ENCODE measurements at regions of chr1 and their contacts with region 1.

Region 1: DNA sequence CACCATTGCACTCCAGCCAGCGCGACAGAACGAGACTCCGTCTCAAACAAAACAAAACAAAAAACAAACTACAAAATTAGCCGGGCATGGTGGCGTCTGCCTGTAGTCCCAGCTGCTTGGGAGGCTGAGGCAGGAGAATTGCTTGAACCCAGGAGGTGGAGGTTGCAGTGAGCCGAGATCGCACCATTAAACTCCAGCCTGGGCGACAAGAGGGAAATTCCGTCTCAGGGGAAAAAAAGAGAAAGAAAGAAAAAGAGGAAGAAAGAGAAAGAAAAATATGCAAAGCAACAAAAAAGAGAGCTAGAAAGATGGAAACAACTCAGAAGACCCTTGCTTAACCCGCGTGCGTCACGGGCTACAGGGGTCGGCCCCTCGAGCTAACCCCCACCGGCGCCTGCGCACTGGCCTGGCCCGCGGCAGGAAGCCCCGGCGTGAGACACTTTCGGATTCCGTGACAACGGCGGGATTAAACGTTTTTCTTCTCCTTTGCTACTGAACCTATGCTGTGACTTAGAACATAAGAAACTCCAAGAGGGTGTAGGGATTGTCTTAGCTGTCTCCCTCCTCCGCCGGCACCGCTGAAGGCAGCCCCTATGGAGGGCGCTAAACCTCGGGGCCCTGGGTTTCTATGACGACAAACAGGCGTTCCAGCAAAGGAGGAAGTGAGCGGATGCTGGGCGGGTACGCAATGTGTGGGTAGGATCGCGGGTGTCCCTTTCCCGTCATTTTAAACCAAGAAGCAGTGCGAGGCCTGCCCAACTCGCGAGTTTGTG is at the start of gene AXDND1:
- DNase-seq: peak; percentile 93
- H3K4me3 ChIP-seq: peak within 1 kb of the TSS; percentile 89
- H3K27ac ChIP-seq: peak within 1 kb of the TSS; percentile 93
- H3K4me1 ChIP-seq: no peaks in the 10 kb centered on the region
- H3K27me3 ChIP-seq: no peaks in the 10 kb centered on the region
- CTCF ChIP-seq: no peak
- total RNA-seq, gene AXDND1: 2.8 to 7.9 TPM

Region 2: GRCh38 chr1:179081687-179082332 is 283.7 kb before region 1 on chr1 and contains the start of gene TOR3A:
- intact Hi-C with region 1: loop called (anchors 5 kb)
- DNase-seq: peak; percentile 96
- H3K4me3 ChIP-seq: peak within 1 kb of the TSS; percentile 99
- H3K27ac ChIP-seq: peak within 1 kb of the TSS; percentile 92
- H3K4me1 ChIP-seq: peaks cover 5% of the 10 kb centered on the region
- H3K27me3 ChIP-seq: no peaks in the 10 kb centered on the region
- CTCF ChIP-seq: no peak
- total RNA-seq, gene TOR3A: 21.6 to 41.1 TPM

Region 3: GRCh38 chr1:179251675-179252074 is 113.8 kb before region 1 on chr1:
- intact Hi-C with region 1: loop called (anchors 2 kb)
- DNase-seq: no peak
- H3K4me3 ChIP-seq: no peak overlapping the region
- H3K27ac ChIP-seq: no peak overlapping the region
- H3K4me1 ChIP-seq: no peaks in the 10 kb centered on the region
- H3K27me3 ChIP-seq: no peaks in the 10 kb centered on the region
- CTCF ChIP-seq: peak; percentile 48